SK-N-SH (cell line): ENCODE measurements at regions of chr1 and their contacts with region 1.

Region 1: DNA sequence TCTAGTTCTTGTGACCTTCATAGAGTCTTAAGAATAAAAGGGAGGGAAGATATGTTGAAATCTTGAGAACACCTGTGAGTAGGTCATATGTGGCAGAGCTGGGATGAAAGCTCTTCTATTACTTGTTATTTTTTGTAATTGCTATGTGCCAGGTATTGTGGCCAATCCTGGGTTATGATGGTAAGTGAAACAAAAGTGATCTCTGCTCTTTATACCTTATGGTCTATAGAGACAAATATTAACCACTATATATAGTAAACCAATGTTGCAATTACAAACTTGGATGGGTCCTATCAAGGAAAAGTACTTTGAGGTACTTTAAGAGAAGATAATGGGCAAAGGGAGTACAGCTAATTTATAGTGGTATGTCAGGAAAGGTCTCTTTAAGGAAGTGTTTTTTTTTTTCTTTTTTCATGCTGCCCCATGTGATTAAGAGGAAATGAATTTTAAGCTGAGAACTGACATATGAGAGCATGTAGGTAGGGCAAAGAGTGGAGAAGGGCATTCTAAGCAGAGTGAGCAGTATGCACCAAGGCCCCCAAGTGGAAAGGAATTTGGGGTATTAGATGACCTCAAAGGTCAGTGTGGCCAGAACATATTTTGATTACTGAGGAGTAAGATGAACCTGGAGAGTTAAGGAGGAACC is 43.3 kb downstream of the POU2F1 start:
- DNase-seq: no peak
- H3K4me3 ChIP-seq: no peak overlapping the region
- H3K27ac ChIP-seq: no peak overlapping the region
- H3K4me1 ChIP-seq: peaks cover 0 to 3% of the 10 kb centered on the region in 2 experiments; a peak in 2 of 4 replicates
- H3K27me3 ChIP-seq: no peaks in the 10 kb centered on the region
- CTCF ChIP-seq: no peak
- EP300 ChIP-seq: no peak
- RAD21 ChIP-seq: no peak

Region 2: GRCh38 chr1:167249702-167250101 is 14.2 kb before region 1 on chr1:
- CTCF ChIA-PET with region 1: interaction called, 14 read pairs
- POLR2A ChIA-PET with region 1: no interaction called
- DNase-seq: no peak
- H3K4me3 ChIP-seq: no peak overlapping the region
- H3K27ac ChIP-seq: no peak overlapping the region
- H3K4me1 ChIP-seq: peaks cover 0 to 2% of the 10 kb centered on the region in 2 experiments; a peak in 3 of 4 replicates
- H3K27me3 ChIP-seq: no peaks in the 10 kb centered on the region
- CTCF ChIP-seq: no peak
- EP300 ChIP-seq: no peak
- RAD21 ChIP-seq: no peak

Region 3: GRCh38 chr1:167276969-167277368 is 13.0 kb after region 1 on chr1:
- CTCF ChIA-PET with region 1: interaction called, 81 read pairs
- POLR2A ChIA-PET with region 1: no interaction called
- DNase-seq: no peak
- H3K4me3 ChIP-seq: no peak overlapping the region
- H3K27ac ChIP-seq: no peak overlapping the region
- H3K4me1 ChIP-seq: peaks cover 0 to 8% of the 10 kb centered on the region in 2 experiments; a peak in 3 of 4 replicates
- H3K27me3 ChIP-seq: no peaks in the 10 kb centered on the region
- CTCF ChIP-seq: no peak
- EP300 ChIP-seq: no peak
- RAD21 ChIP-seq: no peak